ENCODE measurements at regions of chr2 and their contacts with region 1.

Region 1: DNA sequence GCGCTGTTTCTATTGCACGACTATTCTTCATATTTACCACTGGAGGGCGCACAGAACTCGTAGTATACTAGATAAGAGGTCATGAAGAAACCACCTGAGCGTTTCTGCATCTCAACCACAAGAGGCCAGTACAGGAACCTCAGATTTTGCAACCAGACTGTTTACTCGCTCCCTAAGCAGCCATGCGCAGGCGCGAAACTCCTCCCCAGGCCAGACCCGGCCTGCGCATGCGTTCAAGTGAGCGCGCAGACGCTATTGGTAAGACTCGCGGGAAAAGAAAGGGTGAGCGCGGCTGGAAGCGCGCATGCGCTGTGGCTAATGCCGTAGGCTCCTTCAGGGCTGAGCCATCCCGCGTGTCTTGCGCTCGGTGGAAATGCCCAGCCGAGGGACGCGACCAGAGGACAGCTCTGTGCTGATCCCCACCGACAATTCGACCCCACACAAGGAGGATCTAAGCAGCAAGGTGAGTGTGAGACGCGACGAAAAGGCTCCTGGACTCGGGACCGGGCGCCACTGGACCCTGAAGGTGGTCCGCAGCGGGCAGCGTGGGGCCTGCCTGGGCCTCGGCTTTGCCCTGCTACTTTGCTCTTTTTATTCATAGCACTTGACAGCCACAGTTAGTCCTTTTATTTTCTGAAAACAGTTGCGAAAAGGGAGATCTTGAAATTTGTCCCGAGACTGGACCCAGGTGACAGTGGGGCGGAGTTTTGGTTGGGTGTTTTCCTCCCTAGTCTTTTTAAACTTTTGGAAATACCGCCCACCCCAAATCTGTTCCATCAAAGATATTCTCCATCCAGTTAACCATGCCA is at the start of gene ASNSD1:
- H3K4me3 ChIP-seq: peak within 1 kb of the TSS; percentile 89
- H3K27ac ChIP-seq: peak within 1 kb of the TSS; percentile 76; the same call in 1 of the 2 replicates
- H3K4me1 ChIP-seq: peaks cover 20% of the 10 kb centered on the region
- CTCF ChIP-seq: peak; percentile 97

Region 2: DNA sequence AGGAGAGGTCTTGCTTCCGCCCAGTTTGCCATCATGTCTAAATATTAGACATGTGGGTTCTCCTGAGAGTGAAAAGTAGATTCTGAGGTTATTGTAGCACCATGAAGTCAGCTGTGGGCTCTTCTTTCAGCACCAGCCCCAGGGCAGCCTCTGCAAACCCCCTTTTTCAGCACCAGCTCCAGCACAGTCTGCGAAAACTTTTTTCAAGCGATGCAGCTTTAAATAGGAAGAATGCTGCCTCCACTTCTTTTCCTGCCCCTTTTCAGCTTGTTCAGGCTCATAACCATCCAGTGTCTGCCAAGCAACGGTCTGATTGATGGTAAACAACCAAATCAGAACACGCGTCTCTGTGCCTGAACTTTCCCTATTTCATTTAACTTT is 481.8 kb before region 1 on chr2 and contains the start of gene COL5A2:
- CTCF ChIA-PET with region 1: no interaction called
- POLR2A ChIA-PET with region 1: no interaction called
- H3K4me3 ChIP-seq: no peak within 1 kb of the TSS
- H3K27ac ChIP-seq: no peak within 1 kb of the TSS
- H3K4me1 ChIP-seq: no peaks in the 10 kb centered on the region
- CTCF ChIP-seq: no peak

Region 3: GRCh38 chr2:189648846-189649509 is 12.4 kb before region 1 on chr2:
- CTCF ChIA-PET with region 1: interaction called, 10 read pairs
- POLR2A ChIA-PET with region 1: no interaction called
- H3K4me3 ChIP-seq: no peak overlapping the region
- H3K27ac ChIP-seq: no peak overlapping the region
- H3K4me1 ChIP-seq: no peaks in the 10 kb centered on the region
- CTCF ChIP-seq: no peak

Region 4: DNA sequence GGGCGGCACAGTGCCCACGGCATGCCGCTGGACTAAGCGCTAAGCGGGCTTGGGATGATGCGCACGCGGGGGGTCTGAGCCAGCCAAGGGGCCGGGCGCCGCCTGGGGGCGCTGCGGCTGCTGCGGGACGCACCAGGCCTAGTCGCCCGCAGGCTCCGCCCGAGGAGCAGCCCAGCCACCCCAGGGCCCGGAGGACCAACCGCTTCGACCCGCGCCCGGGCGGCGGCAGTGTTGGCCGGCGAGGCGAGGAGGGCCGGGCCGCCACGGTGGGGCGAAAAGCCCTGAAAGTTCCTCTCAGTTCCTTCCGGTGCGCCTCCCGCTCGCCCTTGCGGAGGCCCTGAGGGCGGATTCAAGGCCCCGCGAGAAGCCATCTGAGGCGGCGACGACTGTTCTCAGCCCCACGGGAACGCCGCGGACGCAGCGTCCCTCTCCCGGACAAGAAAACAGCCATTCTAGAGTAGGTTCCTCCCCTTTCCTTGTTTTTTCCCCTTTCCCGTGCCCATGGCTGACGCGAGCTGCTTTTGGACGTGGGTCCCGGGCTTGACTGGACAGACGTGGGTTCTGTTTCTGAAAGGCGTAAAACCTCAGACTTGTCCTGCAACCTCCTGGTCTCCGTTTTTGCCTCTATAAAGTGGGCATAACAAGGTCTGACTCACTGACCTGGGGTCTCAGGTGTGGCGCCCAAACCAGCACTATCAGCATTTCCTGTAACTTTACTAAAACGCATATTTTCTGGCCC is 13.2 kb after region 1 on chr2 and contains the start of gene ANKAR:
- CTCF ChIA-PET with region 1: interaction called, 13 read pairs
- POLR2A ChIA-PET with region 1: interaction called, 3 read pairs
- H3K4me3 ChIP-seq: peak within 1 kb of the TSS; percentile 39
- H3K27ac ChIP-seq: peak within 1 kb of the TSS; percentile 80
- H3K4me1 ChIP-seq: no peaks in the 10 kb centered on the region; the same call in 1 of the 2 replicates
- CTCF ChIP-seq: no peak

Region 5: GRCh38 chr2:189698020-189698887 is 36.9 kb after region 1 on chr2:
- CTCF ChIA-PET with region 1: interaction called, 38 read pairs
- POLR2A ChIA-PET with region 1: no interaction called
- H3K4me3 ChIP-seq: no peak overlapping the region
- H3K27ac ChIP-seq: no peak overlapping the region
- H3K4me1 ChIP-seq: no peaks in the 10 kb centered on the region
- CTCF ChIP-seq: no peak